CD4-positive, alpha-beta T cell (primary cell): ENCODE measurements at regions of chr19 and their contacts with region 1.

Region 1: GRCh38 chr19:51123381-51123800 is 1.3 kb upstream of the SIGLEC9 start:
- DNase-seq: peak in 12 of 14 experiments; percentile 28 to 88 (median 50)
- ATAC-seq: peak; percentile 97
- H3K4me3 ChIP-seq: peak overlapping the region; percentile 35
- H3K4me3 Mint-ChIP-seq: peak overlapping the region; percentile 77
- H3K27ac ChIP-seq: peak overlapping the region in 1 of 2 donors; percentile 79
- H3K27ac Mint-ChIP-seq: peak overlapping the region; percentile 89
- H3K4me1 ChIP-seq: peaks cover 80% of the 10 kb centered on the region
- H3K4me1 Mint-ChIP-seq: peaks cover 86% of the 10 kb centered on the region
- H3K27me3 ChIP-seq: no peaks in the 10 kb centered on the region
- H3K27me3 Mint-ChIP-seq: no peaks in the 10 kb centered on the region
- CTCF ChIP-seq: no peak

Region 2: DNA sequence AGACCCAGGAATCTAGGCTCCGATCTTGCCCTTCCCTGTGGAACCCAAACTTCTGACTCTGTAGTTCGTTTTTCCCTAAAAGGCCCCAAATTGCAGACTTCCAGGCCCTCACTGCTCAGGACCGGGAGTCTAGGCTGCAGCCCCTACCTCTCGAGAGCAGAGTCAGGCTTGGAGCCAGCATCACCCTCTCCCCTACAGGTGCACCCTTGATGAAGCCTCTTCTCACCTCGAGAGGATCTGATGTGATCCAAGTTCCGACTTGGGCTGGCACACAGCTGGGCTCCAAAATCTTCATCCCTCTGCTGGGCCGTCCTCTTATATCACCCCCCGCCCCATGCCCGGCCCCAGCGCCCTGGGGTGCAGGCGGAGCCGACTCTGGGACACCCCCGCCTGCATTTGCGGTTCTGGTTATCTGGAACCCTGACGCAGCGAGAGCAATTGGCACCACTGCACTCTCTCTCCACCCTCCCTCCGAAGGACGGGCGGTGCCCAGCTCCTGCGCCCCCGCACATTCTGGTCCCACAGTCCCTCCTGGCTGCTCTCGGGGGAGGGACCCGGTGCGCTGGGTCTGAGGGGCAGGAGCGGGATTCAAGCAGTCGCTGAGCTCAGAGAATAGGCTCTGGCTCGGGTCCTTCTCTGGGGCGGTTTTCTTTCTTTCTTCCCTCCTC is 139.6 kb before region 1 on chr19 and contains the start of gene KLK7:
- CTCF ChIA-PET with region 1: no interaction called
- POLR2A ChIA-PET with region 1: no interaction called
- intact Hi-C with region 1: no loop called
- DNase-seq: no peak
- ATAC-seq: no peak
- H3K4me3 ChIP-seq: no peak within 1 kb of the TSS
- H3K4me3 Mint-ChIP-seq: no peak within 1 kb of the TSS
- H3K27ac ChIP-seq: no peak within 1 kb of the TSS
- H3K27ac Mint-ChIP-seq: no peak within 1 kb of the TSS
- H3K4me1 ChIP-seq: no peaks in the 10 kb centered on the region
- H3K4me1 Mint-ChIP-seq: no peaks in the 10 kb centered on the region
- H3K27me3 ChIP-seq: peaks cover 3 to 31% of the 10 kb centered on the region in 2 experiments
- H3K27me3 Mint-ChIP-seq: peaks cover 64% of the 10 kb centered on the region
- CTCF ChIP-seq: no peak
- total RNA-seq, gene KLK7: not detected

Region 3: DNA sequence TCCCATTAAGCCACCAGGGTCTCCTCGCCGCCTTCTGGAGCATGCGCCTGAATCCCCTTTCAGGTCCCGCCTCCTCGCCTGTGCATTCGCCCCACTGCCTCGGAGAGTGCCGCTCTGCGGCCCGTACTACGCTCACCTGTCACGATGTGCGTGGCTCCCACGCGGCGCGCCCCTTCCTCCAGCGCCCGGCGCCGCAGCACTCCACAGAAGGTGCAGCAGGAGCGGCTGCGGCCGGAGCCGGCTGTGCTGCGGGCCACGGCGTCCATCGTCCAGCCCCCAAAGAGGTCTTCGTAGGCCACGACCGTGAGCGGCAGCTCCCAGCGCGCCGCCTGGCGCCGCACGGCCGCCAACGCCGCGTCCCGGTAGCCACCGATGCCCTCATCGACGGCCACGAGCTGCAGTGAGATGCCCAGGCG is 19.5 kb before region 1 on chr19:
- CTCF ChIA-PET with region 1: no interaction called
- POLR2A ChIA-PET with region 1: no interaction called
- intact Hi-C with region 1: no loop called
- DNase-seq: no peak
- ATAC-seq: no peak
- H3K4me3 ChIP-seq: no peak overlapping the region
- H3K4me3 Mint-ChIP-seq: no peak overlapping the region
- H3K27ac ChIP-seq: no peak overlapping the region
- H3K27ac Mint-ChIP-seq: no peak overlapping the region
- H3K4me1 ChIP-seq: peaks cover 34% of the 10 kb centered on the region
- H3K4me1 Mint-ChIP-seq: peaks cover 59% of the 10 kb centered on the region
- H3K27me3 ChIP-seq: no peaks in the 10 kb centered on the region
- H3K27me3 Mint-ChIP-seq: no peaks in the 10 kb centered on the region
- CTCF ChIP-seq: no peak

Region 4: GRCh38 chr19:51158474-51159129 is 35.2 kb after region 1 on chr19:
- CTCF ChIA-PET with region 1: no interaction called
- POLR2A ChIA-PET with region 1: interaction called, 3 read pairs
- intact Hi-C with region 1: loop called in 1 of 2 experiments (anchors 5 kb)
- DNase-seq: peak; percentile 56 to 84 (median 65)
- ATAC-seq: peak; percentile 64
- H3K4me3 ChIP-seq: no peak overlapping the region
- H3K4me3 Mint-ChIP-seq: no peak overlapping the region
- H3K27ac ChIP-seq: no peak overlapping the region
- H3K27ac Mint-ChIP-seq: no peak overlapping the region
- H3K4me1 ChIP-seq: peaks cover 8% of the 10 kb centered on the region
- H3K4me1 Mint-ChIP-seq: peaks cover 7% of the 10 kb centered on the region
- H3K27me3 ChIP-seq: no peaks in the 10 kb centered on the region
- H3K27me3 Mint-ChIP-seq: peaks cover 6% of the 10 kb centered on the region
- CTCF ChIP-seq: peak; percentile 88

Region 5: GRCh38 chr19:51219307-51219706 is 95.9 kb after region 1 on chr19:
- CTCF ChIA-PET with region 1: no interaction called
- POLR2A ChIA-PET with region 1: no interaction called
- intact Hi-C with region 1: no loop called
- DNase-seq: no peak
- ATAC-seq: no peak
- H3K4me3 ChIP-seq: no peak overlapping the region
- H3K4me3 Mint-ChIP-seq: no peak overlapping the region
- H3K27ac ChIP-seq: no peak overlapping the region
- H3K27ac Mint-ChIP-seq: no peak overlapping the region
- H3K4me1 ChIP-seq: no peaks in the 10 kb centered on the region
- H3K4me1 Mint-ChIP-seq: no peaks in the 10 kb centered on the region
- H3K27me3 ChIP-seq: peaks cover 4 to 6% of the 10 kb centered on the region in 2 experiments
- H3K27me3 Mint-ChIP-seq: peaks cover 36% of the 10 kb centered on the region
- CTCF ChIP-seq: no peak